ENCODE measurements at regions of chr1 and their contacts with region 1.

Region 1: DNA sequence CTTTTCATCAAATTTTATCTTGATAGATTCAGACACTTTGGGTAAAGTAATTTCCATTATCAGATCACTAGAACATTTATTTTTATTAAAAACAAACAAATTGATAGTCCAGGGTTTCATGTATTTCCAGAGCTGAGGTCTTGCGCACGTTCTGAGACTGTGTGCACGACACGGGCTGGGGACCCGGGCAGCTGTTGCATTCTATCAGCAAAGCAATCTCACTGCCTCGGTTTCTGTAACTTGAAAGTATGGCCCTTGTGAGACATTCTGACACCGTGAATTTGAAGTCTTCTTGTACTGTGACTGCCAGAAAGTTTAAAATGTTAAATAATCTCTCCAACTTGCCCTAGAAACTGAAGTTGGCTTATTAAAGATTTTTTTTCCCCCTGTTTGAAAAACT is 746.9 kb upstream of the ADGRL2 start:
- DNase-seq: no peak
- H3K4me3 Mint-ChIP-seq: peak overlapping the region; percentile 26
- H3K27ac Mint-ChIP-seq: peak overlapping the region; percentile 53
- H3K4me1 Mint-ChIP-seq: no peaks in the 10 kb centered on the region
- H3K27me3 Mint-ChIP-seq: no peaks in the 10 kb centered on the region
- CTCF ChIP-seq: no peak

Region 2: GRCh38 chr1:80542231-80542630 is 511.6 kb before region 1 on chr1:
- CTCF ChIA-PET with region 1: no interaction called
- intact Hi-C with region 1: loop called (anchors 10 kb)
- DNase-seq: no peak
- H3K4me3 Mint-ChIP-seq: no peak overlapping the region
- H3K27ac Mint-ChIP-seq: no peak overlapping the region
- H3K4me1 Mint-ChIP-seq: peaks cover 30% of the 10 kb centered on the region
- H3K27me3 Mint-ChIP-seq: no peaks in the 10 kb centered on the region
- CTCF ChIP-seq: no peak

Region 3: GRCh38 chr1:80882552-80882951 is 171.3 kb before region 1 on chr1:
- CTCF ChIA-PET with region 1: no interaction called
- intact Hi-C with region 1: loop called (anchors 10 kb)
- DNase-seq: peak; percentile 51
- H3K4me3 Mint-ChIP-seq: no peak overlapping the region
- H3K27ac Mint-ChIP-seq: peak overlapping the region; percentile 51
- H3K4me1 Mint-ChIP-seq: peaks cover 14% of the 10 kb centered on the region
- H3K27me3 Mint-ChIP-seq: no peaks in the 10 kb centered on the region
- CTCF ChIP-seq: no peak

Region 4: DNA sequence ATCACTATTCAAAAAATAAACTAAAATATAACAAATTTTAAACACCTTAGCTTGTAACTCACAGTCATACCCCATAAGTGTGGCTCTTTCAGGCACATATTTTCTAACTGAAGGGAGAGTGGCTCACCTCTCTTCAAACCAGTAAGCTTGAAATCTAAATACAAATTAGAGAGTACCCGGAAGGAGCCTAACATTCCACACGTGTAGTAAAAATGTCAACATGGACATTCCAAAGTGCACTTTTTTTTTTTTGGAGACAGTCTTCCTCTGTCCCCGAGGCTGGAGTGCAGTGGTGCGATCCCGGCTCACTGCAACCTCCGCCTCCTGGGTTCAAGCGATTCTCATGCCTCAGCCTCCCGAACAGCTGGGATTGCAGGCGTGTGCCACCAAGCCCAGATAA is 471.3 kb after region 1 on chr1:
- CTCF ChIA-PET with region 1: no interaction called
- intact Hi-C with region 1: no loop called
- DNase-seq: no peak
- H3K4me3 Mint-ChIP-seq: no peak overlapping the region
- H3K27ac Mint-ChIP-seq: no peak overlapping the region
- H3K4me1 Mint-ChIP-seq: no peaks in the 10 kb centered on the region
- H3K27me3 Mint-ChIP-seq: no peaks in the 10 kb centered on the region
- CTCF ChIP-seq: no peak

Measured in Calu3 (cell line).